IMR-90 (cell line): ENCODE measurements at regions of chr1 and their contacts with region 1.

Region 1: GRCh38 chr1:8671306-8671917 is 146.0 kb downstream of the RERE start:
- DNase-seq: peak; percentile 84
- ATAC-seq: peak; percentile 38; the same call in 1 of the 2 replicates
- H3K4me3 ChIP-seq: no peak overlapping the region
- H3K27ac ChIP-seq: no peak overlapping the region
- H3K4me1 ChIP-seq: peaks cover 21% of the 10 kb centered on the region
- H3K27me3 ChIP-seq: no peaks in the 10 kb centered on the region
- CTCF ChIP-seq: peak; percentile 90
- POLR2A ChIP-seq: no peak
- RAD21 ChIP-seq: peak; percentile 85

Region 2: GRCh38 chr1:8560611-8561544 is 110.5 kb before region 1 on chr1:
- CTCF ChIA-PET with region 1: interaction called, 4 read pairs
- POLR2A ChIA-PET with region 1: no interaction called
- dilution Hi-C with region 1: no loop called
- in situ Hi-C with region 1: no loop called
- intact Hi-C with region 1: loop called (anchors 1 kb)
- DNase-seq: peak; percentile 60
- ATAC-seq: peak; percentile 85
- H3K4me3 ChIP-seq: no peak overlapping the region
- H3K27ac ChIP-seq: no peak overlapping the region
- H3K4me1 ChIP-seq: peaks cover 7% of the 10 kb centered on the region
- H3K27me3 ChIP-seq: no peaks in the 10 kb centered on the region
- CTCF ChIP-seq: peak; percentile 84
- POLR2A ChIP-seq: no peak
- RAD21 ChIP-seq: peak; percentile 89

Region 3: DNA sequence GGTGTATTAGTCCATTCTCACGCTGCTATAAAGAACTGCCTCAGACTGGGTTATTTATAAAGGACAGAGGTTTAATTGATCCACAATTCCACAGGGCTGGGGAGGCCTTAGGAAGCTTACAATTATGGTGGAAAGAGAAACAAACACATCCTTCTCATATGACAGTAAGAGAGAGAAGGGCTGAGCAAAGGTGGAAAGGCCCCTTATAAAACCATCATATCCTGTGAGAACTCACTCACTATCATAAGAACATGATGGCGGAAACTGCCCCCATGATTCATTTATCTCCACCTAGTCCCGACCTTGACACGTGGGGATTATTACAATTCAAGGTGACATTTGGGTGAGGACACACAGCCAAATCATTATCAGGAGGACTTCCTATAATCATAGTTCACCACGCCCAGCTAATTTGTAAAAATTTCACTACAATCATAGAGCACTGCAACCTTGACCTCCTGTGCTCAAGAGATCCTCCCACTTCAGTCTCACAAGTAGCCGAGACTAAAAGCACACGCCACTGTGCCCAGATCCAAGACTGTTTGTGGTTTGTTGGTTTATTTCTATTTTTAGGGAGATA is 18.9 kb before region 1 on chr1:
- CTCF ChIA-PET with region 1: no interaction called
- POLR2A ChIA-PET with region 1: no interaction called
- dilution Hi-C with region 1: no loop called
- in situ Hi-C with region 1: no loop called
- intact Hi-C with region 1: loop called (anchors 1 kb)
- DNase-seq: no peak
- ATAC-seq: no peak
- H3K4me3 ChIP-seq: no peak overlapping the region
- H3K27ac ChIP-seq: no peak overlapping the region
- H3K4me1 ChIP-seq: peaks cover 14% of the 10 kb centered on the region
- H3K27me3 ChIP-seq: no peaks in the 10 kb centered on the region
- CTCF ChIP-seq: no peak
- POLR2A ChIP-seq: no peak
- RAD21 ChIP-seq: no peak